CD8-positive, alpha-beta memory T cell (primary cell): ENCODE measurements at regions of chr22 and their contacts with region 1.

Region 1: GRCh38 chr22:36379593-36380361 is 8.0 kb downstream of the MYH9 start:
- DNase-seq: peak; percentile 42 to 81 (median 64)
- H3K4me3 ChIP-seq: peak overlapping the region; percentile 52
- H3K4me3 Mint-ChIP-seq: peak overlapping the region; percentile 61 to 88 (median 84)
- H3K27ac ChIP-seq: peak overlapping the region; percentile 48
- H3K27ac Mint-ChIP-seq: peak overlapping the region; percentile 89 to 99 (median 98)
- H3K4me1 ChIP-seq: peaks cover 96% of the 10 kb centered on the region
- H3K4me1 Mint-ChIP-seq: peaks cover 84 to 94% (median 91%) of the 10 kb centered on the region in 3 donors
- H3K27me3 ChIP-seq: no peaks in the 10 kb centered on the region
- H3K27me3 Mint-ChIP-seq: no peaks in the 10 kb centered on the region

Region 2: DNA sequence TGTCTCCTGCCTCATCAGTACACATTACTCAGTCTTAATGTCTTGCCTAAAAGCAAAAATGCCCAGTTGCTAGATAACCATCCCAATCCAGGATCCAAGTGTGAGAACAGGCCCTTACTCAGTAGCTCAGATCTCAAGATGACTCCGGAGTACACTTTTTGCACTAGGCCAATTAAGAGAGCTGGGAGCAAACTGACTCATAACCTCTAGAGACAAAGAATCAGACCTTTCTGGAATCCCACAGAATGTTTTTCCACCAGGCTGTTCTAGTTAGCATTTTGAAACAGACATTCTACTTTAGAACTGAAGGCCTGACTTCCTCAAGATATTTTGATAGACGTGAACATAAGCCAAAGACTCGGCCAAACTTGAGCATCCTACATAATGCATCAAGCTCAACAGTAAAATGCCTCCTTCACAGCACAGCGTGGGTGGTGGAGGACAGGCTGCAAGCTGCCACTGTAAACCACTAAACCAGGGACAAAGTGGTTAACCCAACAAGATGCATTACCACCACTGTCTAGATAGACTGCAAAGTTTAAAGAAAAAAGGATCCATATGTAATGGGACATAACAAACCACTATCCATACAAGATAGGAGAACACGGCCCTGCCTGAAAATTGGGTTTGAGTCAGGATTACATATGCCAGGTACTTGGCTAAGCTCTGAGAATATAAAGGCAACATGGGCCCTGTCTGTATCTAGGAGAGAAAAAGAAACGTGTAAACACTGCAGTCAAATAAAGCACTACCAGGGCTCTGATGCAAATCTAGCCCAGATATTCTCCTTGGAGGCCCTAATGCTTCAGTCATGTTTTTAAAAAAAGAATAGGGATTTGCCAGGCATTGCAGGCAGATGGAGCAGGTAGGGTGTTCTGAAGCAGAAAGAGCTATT is 40.4 kb before region 1 on chr22:
- CTCF ChIA-PET with region 1: interaction called, 48 read pairs
- POLR2A ChIA-PET with region 1: interaction called, 76 read pairs
- DNase-seq: peak in 1 of 5 donors; percentile 47
- H3K4me3 ChIP-seq: no peak overlapping the region
- H3K4me3 Mint-ChIP-seq: peak overlapping the region; percentile 40 to 67 (median 65)
- H3K27ac ChIP-seq: no peak overlapping the region
- H3K27ac Mint-ChIP-seq: peak overlapping the region; percentile 90 to 99 (median 93)
- H3K4me1 ChIP-seq: peaks cover 98% of the 10 kb centered on the region
- H3K4me1 Mint-ChIP-seq: peaks cover 83 to 97% (median 95%) of the 10 kb centered on the region in 3 donors
- H3K27me3 ChIP-seq: no peaks in the 10 kb centered on the region
- H3K27me3 Mint-ChIP-seq: peaks cover 0 to 2% of the 10 kb centered on the region in 2 donors

Region 3: GRCh38 chr22:36350751-36351594 is 28.8 kb before region 1 on chr22:
- CTCF ChIA-PET with region 1: interaction called, 9 read pairs
- POLR2A ChIA-PET with region 1: interaction called, 14 read pairs
- DNase-seq: no peak
- H3K4me3 ChIP-seq: no peak overlapping the region
- H3K4me3 Mint-ChIP-seq: peak overlapping the region; percentile 53 to 91 (median 72)
- H3K27ac ChIP-seq: no peak overlapping the region
- H3K27ac Mint-ChIP-seq: peak overlapping the region; percentile 87 to 99 (median 95)
- H3K4me1 ChIP-seq: peaks cover 92% of the 10 kb centered on the region
- H3K4me1 Mint-ChIP-seq: peaks cover 85 to 95% (median 91%) of the 10 kb centered on the region in 3 donors
- H3K27me3 ChIP-seq: no peaks in the 10 kb centered on the region
- H3K27me3 Mint-ChIP-seq: peaks cover 0 to 10% of the 10 kb centered on the region in 2 donors

Region 4: GRCh38 chr22:36359181-36359996 is 20.4 kb before region 1 on chr22:
- CTCF ChIA-PET with region 1: interaction called, 32 read pairs
- POLR2A ChIA-PET with region 1: interaction called, 40 read pairs
- DNase-seq: peak in 1 of 5 donors; percentile 53
- H3K4me3 ChIP-seq: peak overlapping the region; percentile 5
- H3K4me3 Mint-ChIP-seq: peak overlapping the region; percentile 60 to 76 (median 71)
- H3K27ac ChIP-seq: no peak overlapping the region
- H3K27ac Mint-ChIP-seq: peak overlapping the region; percentile 92 to 99 (median 95)
- H3K4me1 ChIP-seq: peaks cover 98% of the 10 kb centered on the region
- H3K4me1 Mint-ChIP-seq: peaks cover 94 to 99% (median 99%) of the 10 kb centered on the region in 3 donors
- H3K27me3 ChIP-seq: no peaks in the 10 kb centered on the region
- H3K27me3 Mint-ChIP-seq: peaks cover 0 to 4% of the 10 kb centered on the region in 2 donors